Thyroid gland (tissue), 4 donors: ENCODE measurements at regions of chr10 and their contacts with region 1.

Region 1: DNA sequence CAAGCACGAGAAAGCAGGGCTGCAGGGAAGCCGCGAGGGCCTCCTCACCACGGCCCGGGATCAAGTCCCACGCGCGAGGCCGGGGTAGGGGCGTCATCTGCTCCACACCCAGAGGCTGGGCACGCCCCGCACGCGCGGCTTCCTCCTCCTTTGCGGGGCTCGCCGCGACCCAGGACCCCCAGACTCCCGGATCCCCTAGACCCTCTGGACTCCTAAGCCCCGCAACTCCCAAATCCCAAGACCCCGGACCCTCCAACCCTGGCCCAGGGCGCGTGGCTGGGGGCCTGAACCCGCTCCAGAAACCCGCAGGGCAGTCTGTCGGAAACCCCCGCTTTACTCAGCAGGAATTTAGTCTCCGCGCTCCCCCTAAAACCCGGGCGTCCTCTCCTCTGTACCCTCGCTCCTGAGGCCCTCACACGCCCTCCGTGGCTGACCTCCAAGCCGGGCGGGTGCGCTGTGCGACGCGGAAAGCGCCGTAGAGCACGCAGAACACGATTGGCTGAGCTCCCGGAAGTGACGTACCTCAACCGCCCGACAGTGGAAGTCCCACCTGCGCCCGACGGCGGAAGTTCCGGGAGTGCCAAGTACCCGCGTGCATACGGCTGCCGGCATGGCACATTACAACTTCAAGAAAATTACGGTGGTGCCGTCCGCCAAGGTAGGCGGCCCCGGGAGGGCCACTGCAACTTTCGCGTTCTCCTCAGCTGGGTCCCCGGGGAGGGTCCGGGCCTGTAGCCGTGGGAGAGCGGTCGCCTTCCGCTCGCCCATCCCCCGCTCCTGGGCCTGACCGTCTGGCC is at the start of gene GTPBP4:
- DNase-seq: peak; percentile 99
- H3K4me3 ChIP-seq: peak within 1 kb of the TSS; percentile 58 to 87 (median 80)
- H3K27ac ChIP-seq: peak within 1 kb of the TSS; percentile 73 to 87 (median 85)
- H3K4me1 ChIP-seq: peaks cover 28 to 36% of the 10 kb centered on the region in 2 donors
- H3K27me3 ChIP-seq: no peaks in the 10 kb centered on the region
- CTCF ChIP-seq: peak in 1 of 6 experiments; percentile 33
- POLR2A ChIP-seq: peak in 1 of 2 donors; percentile 81
- total RNA-seq, gene GTPBP4: 12.0 to 24.6 (median 19.8) TPM

Region 2: GRCh38 chr10:822661-823367 is 165.3 kb before region 1 on chr10:
- intact Hi-C with region 1: loop called (anchors 10 kb)
- DNase-seq: no peak
- H3K4me3 ChIP-seq: no peak overlapping the region
- H3K27ac ChIP-seq: peak overlapping the region in 2 of 3 donors; percentile 11 to 85
- H3K4me1 ChIP-seq: peaks cover 43 to 51% of the 10 kb centered on the region in 2 donors
- H3K27me3 ChIP-seq: no peaks in the 10 kb centered on the region
- CTCF ChIP-seq: no peak
- POLR2A ChIP-seq: no peak